Activated B cell treated with CpG ODN at 0.5 μM for 24 hours (primary cell): ENCODE measurements at regions of chr6 and their contacts with region 1.

Region 1: DNA sequence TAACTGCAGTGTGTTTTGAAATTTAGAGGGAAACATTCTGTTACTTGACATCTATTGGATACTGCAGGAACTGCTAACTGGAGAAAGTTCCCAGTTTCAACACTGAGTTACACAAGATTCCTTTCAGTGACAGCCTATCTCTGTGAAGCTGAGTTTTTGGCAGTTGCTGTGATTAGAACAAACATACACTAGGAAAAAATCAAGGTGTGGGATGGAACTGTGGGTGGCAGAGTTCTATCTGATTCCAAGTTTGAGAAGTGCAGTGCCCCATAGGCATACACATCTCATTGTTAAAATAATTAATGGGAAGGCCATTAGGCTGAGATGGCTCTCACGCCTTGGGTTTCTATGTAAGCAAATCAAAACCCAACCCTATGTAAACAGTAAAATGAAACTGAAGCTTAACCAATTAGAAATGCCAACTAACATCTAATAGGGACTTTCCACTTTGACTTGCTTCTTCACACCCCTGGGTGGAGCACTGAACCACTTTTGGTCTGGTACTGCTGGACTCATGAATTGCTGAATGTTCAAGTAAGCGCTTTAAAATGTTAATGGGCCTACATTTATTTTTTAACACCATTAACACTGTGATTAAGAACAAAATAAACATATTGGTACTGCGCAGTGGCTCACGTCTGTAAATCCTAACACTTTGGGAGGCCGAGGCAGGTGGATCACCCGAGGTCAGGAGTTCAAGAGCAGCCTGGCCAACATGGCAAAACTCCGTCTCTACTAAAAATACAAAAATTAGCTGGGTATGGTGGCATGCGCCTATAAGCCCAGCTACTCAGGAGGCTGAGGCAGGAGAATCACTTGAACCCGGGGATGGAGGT is 55.2 kb upstream of the TBC1D7 start:
- DNase-seq: no peak
- ATAC-seq: peak; percentile 98
- H3K4me3 Mint-ChIP-seq: peak overlapping the region; percentile 44
- H3K27ac Mint-ChIP-seq: peak overlapping the region; percentile 82
- H3K4me1 Mint-ChIP-seq: peaks cover 73% of the 10 kb centered on the region
- H3K27me3 Mint-ChIP-seq: no peaks in the 10 kb centered on the region
- CTCF ChIP-seq: no peak

Region 2: DNA sequence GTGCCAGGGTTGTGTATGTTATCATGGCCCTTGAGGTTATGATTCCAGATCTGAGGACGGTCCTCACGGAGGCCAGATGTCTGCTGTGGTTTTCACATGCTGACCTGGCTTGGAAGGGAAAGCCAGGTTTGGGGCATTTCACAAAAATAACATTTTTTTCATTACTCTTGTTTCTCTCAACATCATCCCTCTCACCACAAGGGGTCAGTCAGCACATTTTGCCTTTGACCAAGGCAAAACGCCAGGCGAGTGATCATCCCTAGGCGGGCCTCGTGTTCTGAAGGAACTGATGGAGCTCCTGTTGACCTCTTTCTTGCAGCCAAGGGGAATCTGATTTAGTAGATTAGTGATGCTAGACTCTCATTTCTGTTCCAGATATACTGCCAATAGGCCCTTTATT is 188.7 kb before region 1 on chr6:
- CTCF ChIA-PET with region 1: interaction called, 4 read pairs
- POLR2A ChIA-PET with region 1: no interaction called
- intact Hi-C with region 1: loop called (anchors 2 kb)
- DNase-seq: peak; percentile 21
- ATAC-seq: peak; percentile 82
- H3K4me3 Mint-ChIP-seq: no peak overlapping the region
- H3K27ac Mint-ChIP-seq: no peak overlapping the region
- H3K4me1 Mint-ChIP-seq: peaks cover 11% of the 10 kb centered on the region
- H3K27me3 Mint-ChIP-seq: peaks cover 4% of the 10 kb centered on the region
- CTCF ChIP-seq: peak; percentile 55

Region 3: DNA sequence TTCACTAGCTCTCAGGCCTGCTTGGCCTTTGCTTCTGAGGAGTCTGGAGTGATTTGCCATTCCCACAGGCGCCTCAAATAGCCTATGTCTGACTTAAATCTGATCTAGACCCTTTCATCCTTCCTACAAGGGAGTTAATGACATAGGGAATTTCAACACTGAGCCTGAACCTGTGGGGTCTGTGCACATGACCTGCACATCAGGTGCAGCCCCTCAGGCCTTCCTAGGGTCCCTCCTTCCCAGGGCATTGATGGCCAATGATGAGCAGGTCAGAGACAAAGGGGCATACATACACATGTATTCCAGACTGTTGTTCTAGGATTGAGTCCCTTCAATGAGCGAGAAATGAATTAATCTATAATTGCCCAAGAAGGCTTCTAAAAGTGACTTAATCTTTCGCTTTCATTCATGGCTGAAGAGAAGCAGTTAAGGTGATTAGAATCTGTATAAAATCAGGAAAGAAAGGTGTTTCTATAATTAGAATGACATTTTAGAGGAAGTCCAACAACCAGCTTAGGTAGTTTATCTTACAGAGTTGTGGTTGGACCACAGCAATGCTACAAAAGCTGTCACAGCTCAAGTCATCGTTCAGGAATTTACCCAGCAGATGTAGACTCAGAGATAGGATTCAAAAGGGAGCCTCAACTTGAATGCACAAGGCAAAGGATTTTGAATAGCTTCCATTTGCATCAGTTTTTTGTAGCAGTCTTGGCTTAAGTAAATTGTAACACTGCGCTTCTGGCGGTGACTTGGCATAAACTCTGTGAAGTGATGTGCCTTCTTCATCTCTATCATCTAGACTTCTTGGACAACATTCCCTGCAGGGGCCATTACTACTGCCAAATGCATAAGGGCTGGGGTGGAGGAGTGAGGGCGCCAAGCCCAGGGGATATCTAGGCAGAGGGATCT is 28.2 kb before region 1 on chr6:
- CTCF ChIA-PET with region 1: interaction called, 12 read pairs
- POLR2A ChIA-PET with region 1: interaction called, 13 read pairs
- intact Hi-C with region 1: loop called (anchors 1 kb)
- DNase-seq: no peak
- ATAC-seq: peak; percentile 46
- H3K4me3 Mint-ChIP-seq: peak overlapping the region; percentile 70
- H3K27ac Mint-ChIP-seq: peak overlapping the region; percentile 92
- H3K4me1 Mint-ChIP-seq: peaks cover 70% of the 10 kb centered on the region
- H3K27me3 Mint-ChIP-seq: no peaks in the 10 kb centered on the region
- CTCF ChIP-seq: no peak

Region 4: GRCh38 chr6:13427801-13428582 is 44.4 kb after region 1 on chr6:
- CTCF ChIA-PET with region 1: interaction called, 5 read pairs
- POLR2A ChIA-PET with region 1: interaction called, 4 read pairs
- intact Hi-C with region 1: loop called (anchors 1 kb)
- DNase-seq: peak; percentile 58
- ATAC-seq: peak; percentile 86
- H3K4me3 Mint-ChIP-seq: peak overlapping the region; percentile 80
- H3K27ac Mint-ChIP-seq: peak overlapping the region; percentile 95
- H3K4me1 Mint-ChIP-seq: peaks cover 68% of the 10 kb centered on the region
- H3K27me3 Mint-ChIP-seq: no peaks in the 10 kb centered on the region
- CTCF ChIP-seq: no peak

Region 5: DNA sequence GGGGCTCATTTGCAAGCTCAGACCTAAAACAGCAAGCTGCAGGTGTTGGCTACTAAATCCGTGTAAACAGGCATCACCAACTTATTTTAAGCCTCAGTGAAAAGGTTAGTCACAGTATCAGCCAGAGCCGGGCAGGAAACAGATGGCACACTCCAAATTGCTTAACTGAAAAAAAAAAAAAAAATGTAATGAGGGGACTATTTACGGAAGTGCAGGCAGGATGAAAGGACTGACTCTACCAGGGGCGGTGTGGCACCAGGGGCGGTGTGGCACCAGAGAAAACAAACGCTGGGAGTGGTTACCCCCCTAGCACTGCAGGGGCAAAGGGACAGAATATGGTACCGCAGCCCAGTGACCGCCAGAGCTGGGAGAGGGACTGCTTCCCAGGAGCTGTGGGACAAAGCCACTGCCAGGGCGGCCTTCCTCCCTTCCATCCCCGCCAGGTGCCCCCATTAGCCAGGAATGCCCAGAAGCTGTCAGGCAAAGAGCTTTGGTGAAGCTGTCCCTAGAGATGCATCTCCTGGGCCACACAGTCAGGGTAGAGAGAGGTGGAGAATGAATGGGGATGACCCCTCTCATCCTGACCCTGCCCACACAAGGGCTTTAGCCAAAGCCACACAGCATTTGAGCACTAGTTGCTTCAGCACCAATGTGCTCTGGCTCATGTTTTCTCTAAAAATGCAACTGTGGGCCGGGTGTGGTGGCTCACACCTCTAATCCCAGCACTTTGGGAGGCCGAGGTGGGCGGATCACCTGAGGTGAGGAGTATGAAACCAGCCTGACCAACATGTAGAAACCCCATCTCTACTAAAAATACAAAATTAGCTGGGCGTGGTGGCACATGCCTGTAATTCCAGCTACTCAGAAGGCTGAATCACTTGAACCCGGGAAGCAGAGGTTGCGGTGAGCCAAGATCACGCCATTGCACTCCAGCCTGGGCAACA is 143.5 kb after region 1 on chr6:
- CTCF ChIA-PET with region 1: interaction called, 6 read pairs
- POLR2A ChIA-PET with region 1: no interaction called
- intact Hi-C with region 1: loop called (anchors 2 kb)
- DNase-seq: peak; percentile 41
- ATAC-seq: peak; percentile 90
- H3K4me3 Mint-ChIP-seq: peak overlapping the region; percentile 3
- H3K27ac Mint-ChIP-seq: peak overlapping the region; percentile 78
- H3K4me1 Mint-ChIP-seq: peaks cover 47% of the 10 kb centered on the region
- H3K27me3 Mint-ChIP-seq: no peaks in the 10 kb centered on the region
- CTCF ChIP-seq: no peak

Region 6: GRCh38 chr6:13624871-13625288 is 241.3 kb after region 1 on chr6:
- CTCF ChIA-PET with region 1: interaction called, 4 read pairs
- POLR2A ChIA-PET with region 1: no interaction called
- intact Hi-C with region 1: loop called (anchors 2 kb)
- DNase-seq: no peak
- ATAC-seq: peak; percentile 71
- H3K4me3 Mint-ChIP-seq: no peak overlapping the region
- H3K27ac Mint-ChIP-seq: peak overlapping the region; percentile 51
- H3K4me1 Mint-ChIP-seq: peaks cover 5% of the 10 kb centered on the region
- H3K27me3 Mint-ChIP-seq: no peaks in the 10 kb centered on the region
- CTCF ChIP-seq: no peak